ENCODE measurements at regions of chrX and their contacts with region 1.

Region 1: GRCh38 chrX:47093248-47093647 is 15.0 kb downstream of the RGN start:
- DNase-seq: peak; percentile 36 to 70 (median 64)
- H3K4me3 ChIP-seq: no peak overlapping the region
- H3K27ac ChIP-seq: no peak overlapping the region
- H3K4me1 ChIP-seq: peaks cover 0 to 16% (median 6%) of the 10 kb centered on the region in 4 experiments
- H3K27me3 ChIP-seq: peaks cover 0 to 7% (median 0%) of the 10 kb centered on the region in 5 experiments

Region 2: DNA sequence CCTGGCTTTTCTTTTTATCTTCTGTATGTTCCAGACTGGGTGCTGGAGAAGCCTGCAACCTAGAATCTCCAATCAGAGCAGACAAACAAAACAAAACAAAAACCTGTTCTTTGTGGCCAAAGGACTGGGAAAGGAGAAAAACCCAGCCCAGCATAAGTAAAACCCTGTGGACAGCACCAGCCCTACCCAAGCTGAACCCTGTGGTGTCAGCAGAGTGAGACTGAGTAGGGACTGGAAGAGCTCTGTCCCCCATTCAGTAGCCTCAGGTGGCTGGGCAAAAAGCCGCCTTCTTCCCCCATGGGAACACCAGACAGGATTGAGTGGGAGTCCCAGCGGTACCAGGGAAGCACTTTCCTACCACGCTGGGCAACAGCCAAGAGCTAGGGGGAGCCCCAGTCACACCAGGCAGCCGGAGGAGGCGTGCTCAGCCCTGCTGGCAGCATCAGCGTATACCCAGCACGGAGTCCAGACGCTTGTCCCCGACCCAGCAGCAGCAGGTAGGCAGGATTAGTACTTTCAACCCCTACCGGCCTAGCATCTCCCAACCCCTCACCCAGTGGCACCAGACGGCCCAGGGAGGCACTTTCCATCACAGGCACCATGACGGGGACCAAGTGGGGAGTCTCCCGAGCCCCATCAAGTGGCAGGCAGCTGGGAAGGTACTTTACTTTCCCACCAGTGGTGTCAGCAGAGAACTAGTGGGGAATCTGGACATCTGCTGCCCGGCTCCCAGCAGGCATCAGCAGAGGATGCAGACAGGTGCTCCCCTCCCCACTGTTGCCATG is 189.6 kb before region 1 on chrX:
- CTCF ChIA-PET with region 1: interaction called, 10 read pairs
- POLR2A ChIA-PET with region 1: no interaction called
- DNase-seq: peak; percentile 60 to 77 (median 72)
- H3K4me3 ChIP-seq: peak overlapping the region; percentile 38 to 81 (median 58)
- H3K27ac ChIP-seq: no peak overlapping the region
- H3K4me1 ChIP-seq: peaks cover 0 to 6% (median 4%) of the 10 kb centered on the region in 4 experiments
- H3K27me3 ChIP-seq: peaks cover 0 to 12% (median 0%) of the 10 kb centered on the region in 5 experiments

Measured in common myeloid progenitor, CD34-positive (primary cell).